ENCODE measurements at regions of chr6 and their contacts with region 1.

Region 1: GRCh38 chr6:13624871-13625288 is 9.7 kb downstream of the NOL7 start:
- DNase-seq: no peak
- H3K4me3 ChIP-seq: no peak overlapping the region
- H3K27ac ChIP-seq: no peak overlapping the region
- H3K4me1 ChIP-seq: no peaks in the 10 kb centered on the region
- H3K27me3 ChIP-seq: no peaks in the 10 kb centered on the region
- CTCF ChIP-seq: peak; percentile 55

Region 2: GRCh38 chr6:13454286-13455221 is 170.3 kb before region 1 on chr6:
- intact Hi-C with region 1: no loop called
- DNase-seq: peak; percentile 46
- H3K4me3 ChIP-seq: no peak overlapping the region
- H3K27ac ChIP-seq: peak overlapping the region; percentile 63
- H3K4me1 ChIP-seq: peaks cover 93% of the 10 kb centered on the region
- H3K27me3 ChIP-seq: no peaks in the 10 kb centered on the region
- CTCF ChIP-seq: peak; percentile 40

Region 3: DNA sequence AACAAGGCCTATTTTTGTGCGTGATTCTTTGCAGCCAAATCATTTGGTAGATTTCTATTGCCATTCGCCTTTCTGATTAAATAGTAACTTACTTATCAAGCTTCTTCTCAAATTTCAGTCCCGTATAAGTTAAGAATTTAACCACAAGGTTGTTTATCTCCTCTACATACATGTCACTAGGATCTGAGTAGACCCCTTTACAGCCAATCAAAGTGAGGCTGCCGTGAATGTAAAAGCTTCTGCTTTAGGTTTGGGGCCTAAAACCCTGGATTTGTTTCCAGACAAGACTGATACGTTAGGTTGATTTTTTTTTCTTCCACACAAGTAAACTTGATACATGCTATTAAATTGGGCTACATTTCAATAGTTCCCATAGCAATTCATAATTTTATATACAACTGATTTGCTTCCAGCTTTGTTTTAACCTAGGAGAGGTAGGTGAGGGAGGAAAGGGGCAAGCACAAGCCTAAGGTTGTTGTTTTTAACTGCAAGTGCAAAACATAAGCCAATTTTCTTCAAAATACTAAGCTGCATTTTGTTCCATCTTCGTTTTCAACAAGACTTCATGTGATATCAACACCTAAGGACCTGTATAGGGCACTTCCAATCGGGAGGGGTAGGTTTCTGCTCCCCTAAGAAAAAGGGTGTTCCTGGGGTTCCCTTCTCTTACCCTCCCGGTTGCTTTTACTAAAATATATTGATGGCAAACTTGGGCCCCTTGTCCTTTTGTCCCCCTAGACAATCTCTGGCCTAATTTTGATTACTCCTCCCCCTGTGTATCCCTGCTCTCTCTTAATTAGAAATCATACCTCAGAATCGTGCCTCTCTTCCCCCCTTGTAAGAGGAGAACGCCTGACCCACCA is 85.0 kb after region 1 on chr6:
- intact Hi-C with region 1: loop called (anchors 10 kb)
- DNase-seq: no peak
- H3K4me3 ChIP-seq: peak overlapping the region; percentile 92
- H3K27ac ChIP-seq: peak overlapping the region; percentile 92
- H3K4me1 ChIP-seq: peaks cover 53% of the 10 kb centered on the region
- H3K27me3 ChIP-seq: no peaks in the 10 kb centered on the region
- CTCF ChIP-seq: no peak

Measured in left ventricle myocardium inferior (tissue), 1 donor.